ENCODE measurements at regions of chr2 and their contacts with region 1.

Region 1: GRCh38 chr2:11796190-11797171 is 50.0 kb downstream of the LPIN1 start:
- DNase-seq: no peak
- ATAC-seq: peak in 3 of 4 donors; percentile 20 to 35 (median 24)
- H3K4me3 ChIP-seq: no peak overlapping the region
- H3K27ac ChIP-seq: no peak overlapping the region
- H3K4me1 ChIP-seq: no peaks in the 10 kb centered on the region
- H3K27me3 ChIP-seq: no peaks in the 10 kb centered on the region
- CTCF ChIP-seq: no peak

Region 2: GRCh38 chr2:11812466-11813248 is 16.2 kb after region 1 on chr2:
- intact Hi-C with region 1: loop called in 1 of 2 experiments (anchors 1 kb)
- DNase-seq: no peak
- ATAC-seq: no peak
- H3K4me3 ChIP-seq: no peak overlapping the region
- H3K27ac ChIP-seq: no peak overlapping the region
- H3K4me1 ChIP-seq: peaks cover 19% of the 10 kb centered on the region
- H3K27me3 ChIP-seq: no peaks in the 10 kb centered on the region
- CTCF ChIP-seq: no peak

Measured in psoas muscle (tissue), 8 donors.